Ascending aorta (tissue), 2 donors: ENCODE measurements at regions of chr9 and their contacts with region 1.

Region 1: DNA sequence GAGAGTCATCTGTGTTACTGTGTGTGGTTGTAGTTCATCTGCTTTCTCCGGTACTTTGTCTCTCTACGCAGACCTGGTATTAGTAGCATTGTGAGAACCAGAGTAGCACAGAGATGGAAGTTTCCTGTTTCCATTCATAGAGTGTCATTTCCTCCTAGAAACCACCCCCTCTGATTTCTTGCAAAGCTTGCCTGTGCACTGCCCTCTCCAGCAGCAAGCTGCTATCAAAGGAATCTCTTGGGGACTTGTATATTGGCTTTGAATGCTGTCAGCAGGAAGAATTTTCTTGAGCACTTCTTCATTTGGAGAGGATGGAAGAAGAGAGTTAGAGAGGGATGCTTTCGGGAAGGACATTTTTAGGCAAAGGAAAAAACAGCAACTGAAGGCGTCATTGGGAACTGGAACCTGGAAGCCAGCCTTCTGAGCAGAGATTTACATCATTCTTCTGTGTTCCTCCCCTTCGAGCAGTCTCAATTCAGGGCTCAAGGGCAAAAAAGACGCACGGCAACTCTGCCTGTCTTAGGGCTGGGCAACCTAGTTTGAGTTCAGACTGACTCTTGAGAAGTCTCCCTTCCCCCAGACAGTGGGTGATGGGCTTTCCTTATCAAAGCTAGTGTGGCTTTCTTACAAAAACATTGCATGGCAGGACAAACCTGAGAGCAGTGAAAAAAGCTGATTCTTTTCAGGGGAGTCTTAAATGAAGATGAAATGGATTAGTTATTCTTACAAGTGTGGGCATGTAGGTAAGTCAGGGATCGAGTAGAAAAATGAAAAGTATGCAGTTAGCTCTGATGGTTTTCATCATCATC is 226.3 kb downstream of the AOPEP start:
- DNase-seq: peak in 1 of 2 donors; percentile 83
- H3K4me3 ChIP-seq: peak overlapping the region in 1 of 2 donors; percentile 22
- H3K27ac ChIP-seq: peak overlapping the region; percentile 82 to 84
- H3K4me1 ChIP-seq: peaks cover 11 to 47% of the 10 kb centered on the region in 2 donors
- H3K27me3 ChIP-seq: no peaks in the 10 kb centered on the region
- CTCF ChIP-seq: no peak

Region 2: DNA sequence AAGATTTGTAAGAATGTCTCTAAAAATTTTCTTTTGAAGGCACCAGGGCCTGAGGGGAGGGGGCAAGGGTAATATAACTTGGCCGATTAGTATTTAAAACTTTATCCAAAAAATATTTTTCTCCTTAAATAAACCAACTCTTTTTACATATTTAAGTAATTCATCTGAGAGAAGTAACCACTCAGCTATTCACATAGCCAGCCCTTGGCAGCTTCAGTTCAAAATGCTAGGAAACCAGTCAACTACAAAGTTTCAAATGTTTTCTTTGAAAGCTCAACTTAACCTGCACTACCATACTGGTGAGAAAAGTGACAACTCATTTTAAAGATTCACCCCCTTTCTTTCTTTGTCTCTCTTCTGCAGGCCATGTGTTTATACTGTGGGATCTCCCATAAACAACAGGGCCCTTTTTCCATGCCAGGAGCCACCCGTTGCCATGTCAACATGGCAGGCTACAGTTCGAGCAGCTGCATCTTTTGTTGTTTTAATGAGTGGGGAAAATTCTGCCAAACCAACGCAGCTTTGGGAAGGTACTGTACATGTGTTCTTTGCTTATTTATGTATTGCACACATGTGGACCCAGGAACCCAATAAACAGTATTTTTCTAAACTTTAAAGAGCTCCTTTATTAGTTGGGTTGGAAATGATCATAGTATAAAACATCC is 180.0 kb before region 1 on chr9:
- intact Hi-C with region 1: no loop called
- DNase-seq: no peak
- H3K4me3 ChIP-seq: no peak overlapping the region
- H3K27ac ChIP-seq: peak overlapping the region; percentile 74 to 79
- H3K4me1 ChIP-seq: peaks cover 3 to 11% of the 10 kb centered on the region in 2 donors
- H3K27me3 ChIP-seq: no peaks in the 10 kb centered on the region
- CTCF ChIP-seq: no peak

Region 3: GRCh38 chr9:94937214-94937903 is 15.4 kb before region 1 on chr9:
- intact Hi-C with region 1: no loop called
- DNase-seq: peak in 1 of 2 donors; percentile 44
- H3K4me3 ChIP-seq: no peak overlapping the region
- H3K27ac ChIP-seq: peak overlapping the region; percentile 12 to 48
- H3K4me1 ChIP-seq: peaks cover 2 to 49% of the 10 kb centered on the region in 2 donors
- H3K27me3 ChIP-seq: no peaks in the 10 kb centered on the region
- CTCF ChIP-seq: no peak

Region 4: GRCh38 chr9:94996641-94997040 is 43.9 kb after region 1 on chr9:
- intact Hi-C with region 1: loop called (anchors 2 kb)
- DNase-seq: no peak
- H3K4me3 ChIP-seq: no peak overlapping the region
- H3K27ac ChIP-seq: peak overlapping the region; percentile 83 to 100
- H3K4me1 ChIP-seq: peaks cover 2 to 53% of the 10 kb centered on the region in 2 donors
- H3K27me3 ChIP-seq: no peaks in the 10 kb centered on the region
- CTCF ChIP-seq: no peak